Esophagus squamous epithelium (tissue), 5 donors: ENCODE measurements at regions of chr18 and their contacts with region 1.

Region 1: DNA sequence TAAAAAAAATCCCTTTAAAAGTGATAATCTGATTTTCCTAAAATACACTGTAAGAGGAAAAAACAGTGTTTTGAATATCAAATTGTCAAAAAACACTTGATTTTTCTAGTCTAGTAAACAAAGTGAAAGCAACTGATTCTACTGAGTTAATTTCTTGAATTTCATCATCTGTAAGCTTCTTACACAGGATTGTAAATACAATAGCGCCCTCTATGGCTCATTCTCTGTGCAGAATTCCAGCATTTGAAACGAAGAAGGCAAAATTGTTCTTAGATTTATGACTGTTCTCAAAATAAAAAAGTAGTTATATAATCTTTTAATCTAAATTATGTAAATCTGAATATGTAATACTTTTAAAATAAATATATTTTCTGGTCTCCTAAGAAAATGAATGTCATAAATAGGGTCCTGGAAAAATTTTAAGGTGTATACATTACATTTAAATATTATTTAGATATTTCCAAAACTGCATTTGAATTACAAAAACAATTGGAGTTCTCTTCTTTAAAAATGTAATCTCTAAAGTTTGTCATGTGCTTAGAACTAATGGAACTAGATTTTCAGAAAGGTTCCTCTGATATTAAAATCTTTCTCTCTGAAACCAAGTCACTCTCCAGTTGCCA is 176.9 kb upstream of the MC4R start:
- DNase-seq: no peak
- H3K4me3 ChIP-seq: no peak overlapping the region
- H3K27ac ChIP-seq: no peak overlapping the region
- H3K4me1 ChIP-seq: no peaks in the 10 kb centered on the region
- H3K27me3 ChIP-seq: no peaks in the 10 kb centered on the region
- CTCF ChIP-seq: peak; percentile 41 to 82 (median 64)
- POLR2A ChIP-seq: no peak

Region 2: DNA sequence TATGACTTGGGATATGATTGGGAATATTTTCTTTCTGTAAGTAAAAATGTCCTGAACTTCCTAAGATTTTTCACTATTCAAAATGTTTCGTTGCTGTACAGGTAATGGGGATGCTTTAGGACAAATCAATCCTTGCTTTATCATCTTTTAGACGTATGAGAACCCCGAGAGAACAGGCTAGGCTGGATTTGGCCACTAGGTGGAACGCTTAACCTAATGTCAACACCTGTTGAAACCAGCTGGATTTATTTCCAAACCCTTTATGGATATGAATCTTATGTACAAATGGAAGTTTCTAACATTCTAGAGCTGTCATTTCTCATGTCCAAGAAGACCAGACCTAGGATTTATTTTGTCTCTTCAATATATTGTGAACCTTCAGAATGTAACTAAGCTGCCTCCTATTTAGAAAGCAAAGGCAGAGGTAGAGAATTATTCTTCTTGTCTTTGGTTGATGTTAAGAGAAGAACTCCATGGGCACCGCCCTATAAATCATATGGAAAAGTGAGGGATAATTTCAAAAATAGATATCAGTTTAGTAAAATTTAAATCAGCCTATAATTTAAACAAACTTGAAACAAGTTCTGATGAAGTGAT is 553.0 kb before region 1 on chr18:
- intact Hi-C with region 1: loop called (anchors 10 kb)
- DNase-seq: no peak
- H3K4me3 ChIP-seq: no peak overlapping the region
- H3K27ac ChIP-seq: no peak overlapping the region
- H3K4me1 ChIP-seq: no peaks in the 10 kb centered on the region
- H3K27me3 ChIP-seq: peaks cover 0 to 3% (median 0%) of the 10 kb centered on the region in 4 donors
- CTCF ChIP-seq: peak; percentile 14 to 76 (median 54)
- POLR2A ChIP-seq: no peak